ENCODE measurements at regions of chr10 and their contacts with region 1.

Region 1: DNA sequence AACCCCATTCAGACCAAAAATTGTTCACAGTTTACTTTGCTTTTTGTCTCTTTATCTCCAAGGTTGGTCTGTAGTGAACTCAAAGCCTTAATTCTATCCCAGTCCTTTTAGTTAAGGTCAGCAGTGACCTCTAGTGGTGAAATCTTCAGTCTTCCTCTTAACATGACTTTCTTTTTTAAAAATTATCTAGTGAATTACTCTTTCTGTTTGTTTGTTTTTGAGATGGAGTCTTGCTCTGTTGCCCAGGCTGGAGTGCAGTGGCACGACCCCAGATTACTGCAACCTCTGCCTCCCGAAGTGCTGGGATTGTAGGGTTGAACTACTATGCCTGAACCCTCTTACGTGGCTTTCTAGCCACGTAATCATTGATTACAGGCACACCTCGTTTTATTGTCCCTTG is 25.0 kb downstream of the ZNF487 start:
- DNase-seq: no peak
- ATAC-seq: peak; percentile 63

Region 2: GRCh38 chr10:42615419-42615818 is 846.5 kb before region 1 on chr10:
- intact Hi-C with region 1: no loop called
- DNase-seq: no peak
- ATAC-seq: no peak

Region 3: DNA sequence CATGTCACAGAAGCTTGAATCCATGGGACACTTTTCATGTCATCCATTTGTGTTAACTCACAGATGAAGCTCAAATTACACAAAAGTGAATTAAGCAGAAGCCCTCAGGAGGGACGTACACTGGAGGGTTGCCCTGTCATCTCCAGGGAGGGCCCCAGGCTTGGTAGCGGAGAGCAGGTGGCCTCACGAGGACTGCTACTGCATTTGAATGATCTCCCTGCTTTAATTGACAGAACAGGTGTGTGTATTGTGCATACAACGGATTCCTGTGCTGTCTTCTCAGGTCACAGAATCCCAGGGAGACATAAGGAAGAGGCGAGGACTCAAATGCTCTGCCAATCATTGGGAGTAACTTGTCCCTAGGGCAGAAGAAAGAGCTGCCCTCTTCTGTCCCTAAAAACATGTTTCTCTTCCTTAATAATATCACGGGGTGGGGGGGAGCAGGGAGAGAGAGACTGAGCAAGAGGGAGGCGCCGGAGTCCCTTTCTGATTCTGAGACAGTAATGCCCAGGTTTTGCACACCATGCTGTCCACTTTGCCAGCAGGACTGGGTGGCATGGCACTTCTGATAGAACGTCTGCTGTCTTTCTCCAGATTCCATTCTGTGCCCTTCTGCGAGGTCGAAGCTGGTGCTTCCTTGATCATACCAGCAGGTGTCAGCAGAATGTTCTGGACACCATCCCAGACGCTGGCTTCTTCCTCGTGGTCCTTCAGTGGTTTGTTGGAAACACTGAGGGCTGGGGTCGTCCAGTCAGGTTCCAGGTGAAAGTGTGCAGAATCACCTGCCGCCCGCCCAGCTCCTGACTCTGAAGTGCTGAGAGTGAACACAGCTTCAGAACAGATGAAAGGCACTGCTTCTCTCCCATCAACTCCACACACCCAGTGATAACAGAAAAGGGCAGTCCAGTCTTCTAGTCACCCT is 168.9 kb before region 1 on chr10:
- intact Hi-C with region 1: loop called (anchors 5 kb)
- DNase-seq: peak; percentile 48
- ATAC-seq: peak; percentile 84

Measured in left ventricle myocardium superior (tissue), 1 donor.